Caco-2 (cell line): ENCODE measurements at regions of chr19 and their contacts with region 1.

Region 1: DNA sequence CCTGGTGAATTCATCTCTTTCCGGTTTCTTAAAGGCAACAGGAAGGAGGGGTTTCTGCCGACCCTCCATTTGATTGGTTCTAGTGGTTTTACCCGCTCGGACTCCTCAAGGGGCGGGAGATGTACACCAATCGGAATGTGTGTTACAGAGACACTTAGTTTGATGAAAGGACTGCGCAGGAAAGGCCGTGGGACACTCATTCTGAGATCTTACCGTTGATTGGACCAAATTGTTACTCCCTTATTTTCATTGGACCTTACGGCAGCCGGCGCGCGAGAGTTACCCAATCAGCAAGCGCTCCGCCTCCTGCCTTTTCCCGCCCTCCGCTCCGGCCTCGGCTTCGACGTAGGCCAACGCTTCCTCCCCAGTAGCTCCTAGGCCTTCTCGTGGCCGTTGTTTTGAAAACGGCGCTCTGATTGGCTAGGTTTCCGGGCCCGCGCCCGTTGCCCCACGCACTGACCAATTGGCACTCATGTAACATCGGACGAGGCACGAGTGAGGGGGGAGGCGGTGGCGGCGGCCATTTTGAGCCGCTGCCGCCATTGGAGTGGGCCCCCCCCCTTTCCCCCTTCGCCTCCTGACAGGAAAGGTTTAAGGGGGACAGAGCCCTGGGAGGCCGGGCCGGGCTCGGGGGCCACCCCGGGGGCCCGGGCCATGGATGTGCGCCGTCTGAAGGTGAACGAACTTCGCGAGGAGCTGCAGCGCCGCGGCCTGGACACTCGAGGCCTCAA is at the start of gene HNRNPUL1:
- DNase-seq: peak; percentile 99 to 100
- H3K4me3 ChIP-seq: peak within 1 kb of the TSS; percentile 86
- H3K4me3 Mint-ChIP-seq: peak within 1 kb of the TSS; percentile 83
- H3K27ac Mint-ChIP-seq: peak within 1 kb of the TSS; percentile 87
- H3K4me1 ChIP-seq: peaks cover 11% of the 10 kb centered on the region
- H3K4me1 Mint-ChIP-seq: peaks cover 30% of the 10 kb centered on the region
- H3K27me3 ChIP-seq: no peaks in the 10 kb centered on the region
- H3K27me3 Mint-ChIP-seq: no peaks in the 10 kb centered on the region
- CTCF ChIP-seq: peak; percentile 20 to 46
- total RNA-seq, gene HNRNPUL1: 322 and 324 TPM in 2 replicates

Region 2: GRCh38 chr19:40716655-40717324 is 547.2 kb before region 1 on chr19 and contains the starts of genes COQ8B and ITPKC:
- CTCF ChIA-PET with region 1: no interaction called
- POLR2A ChIA-PET with region 1: no interaction called
- intact Hi-C with region 1: loop called (anchors 2 kb)
- DNase-seq: peak; percentile 100
- H3K4me3 ChIP-seq: peak within 1 kb of the TSS; percentile 71
- H3K4me3 Mint-ChIP-seq: peak within 1 kb of the TSS; percentile 84
- H3K27ac Mint-ChIP-seq: peak within 1 kb of the TSS; percentile 93
- H3K4me1 ChIP-seq: peaks cover 6% of the 10 kb centered on the region; the same call in 1 of the 2 replicates
- H3K4me1 Mint-ChIP-seq: peaks cover 18% of the 10 kb centered on the region
- H3K27me3 ChIP-seq: no peaks in the 10 kb centered on the region
- H3K27me3 Mint-ChIP-seq: no peaks in the 10 kb centered on the region
- CTCF ChIP-seq: no peak
- total RNA-seq, gene COQ8B: 30.9 and 35.7 TPM in 2 replicates
- total RNA-seq, gene ITPKC: 28.5 and 31.2 TPM in 2 replicates

Region 3: GRCh38 chr19:41123716-41124294 is 140.2 kb before region 1 on chr19:
- CTCF ChIA-PET with region 1: interaction called, 5 read pairs
- POLR2A ChIA-PET with region 1: interaction called, 3 read pairs
- intact Hi-C with region 1: loop called (anchors 2 kb)
- DNase-seq: no peak
- H3K4me3 ChIP-seq: no peak overlapping the region
- H3K4me3 Mint-ChIP-seq: no peak overlapping the region
- H3K27ac Mint-ChIP-seq: no peak overlapping the region
- H3K4me1 ChIP-seq: no peaks in the 10 kb centered on the region
- H3K4me1 Mint-ChIP-seq: peaks cover 7% of the 10 kb centered on the region
- H3K27me3 ChIP-seq: no peaks in the 10 kb centered on the region
- H3K27me3 Mint-ChIP-seq: no peaks in the 10 kb centered on the region
- CTCF ChIP-seq: no peak

Region 4: GRCh38 chr19:41206926-41207750 is 56.9 kb before region 1 on chr19:
- CTCF ChIA-PET with region 1: interaction called, 118 read pairs
- POLR2A ChIA-PET with region 1: interaction called, 12 read pairs
- intact Hi-C with region 1: loop called (anchors 1 kb)
- DNase-seq: no peak
- H3K4me3 ChIP-seq: no peak overlapping the region
- H3K4me3 Mint-ChIP-seq: no peak overlapping the region
- H3K27ac Mint-ChIP-seq: no peak overlapping the region
- H3K4me1 ChIP-seq: no peaks in the 10 kb centered on the region
- H3K4me1 Mint-ChIP-seq: peaks cover 6% of the 10 kb centered on the region
- H3K27me3 ChIP-seq: no peaks in the 10 kb centered on the region
- H3K27me3 Mint-ChIP-seq: no peaks in the 10 kb centered on the region
- CTCF ChIP-seq: no peak

Region 5: DNA sequence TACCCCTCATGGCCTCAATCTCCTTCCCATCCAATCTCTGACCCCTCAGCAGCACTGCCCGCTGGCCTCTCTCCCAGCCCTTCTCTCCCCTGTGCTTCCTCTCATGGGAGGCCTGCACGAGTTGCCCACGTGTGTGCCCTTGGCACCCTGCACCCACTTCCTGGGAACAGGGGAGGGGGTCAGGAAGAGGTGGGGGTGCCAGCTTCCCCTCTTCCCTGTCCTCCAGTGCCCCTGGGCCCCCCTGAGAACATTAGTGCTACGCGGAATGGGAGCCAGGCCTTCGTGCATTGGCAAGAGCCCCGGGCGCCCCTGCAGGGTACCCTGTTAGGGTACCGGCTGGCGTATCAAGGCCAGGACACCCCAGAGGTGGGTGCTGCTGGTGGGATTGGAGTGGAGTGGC is 25.8 kb before region 1 on chr19:
- CTCF ChIA-PET with region 1: no interaction called
- POLR2A ChIA-PET with region 1: no interaction called
- intact Hi-C with region 1: no loop called
- DNase-seq: no peak
- H3K4me3 ChIP-seq: no peak overlapping the region
- H3K4me3 Mint-ChIP-seq: no peak overlapping the region
- H3K27ac Mint-ChIP-seq: no peak overlapping the region
- H3K4me1 ChIP-seq: no peaks in the 10 kb centered on the region
- H3K4me1 Mint-ChIP-seq: no peaks in the 10 kb centered on the region
- H3K27me3 ChIP-seq: no peaks in the 10 kb centered on the region
- H3K27me3 Mint-ChIP-seq: no peaks in the 10 kb centered on the region
- CTCF ChIP-seq: no peak

Region 6: DNA sequence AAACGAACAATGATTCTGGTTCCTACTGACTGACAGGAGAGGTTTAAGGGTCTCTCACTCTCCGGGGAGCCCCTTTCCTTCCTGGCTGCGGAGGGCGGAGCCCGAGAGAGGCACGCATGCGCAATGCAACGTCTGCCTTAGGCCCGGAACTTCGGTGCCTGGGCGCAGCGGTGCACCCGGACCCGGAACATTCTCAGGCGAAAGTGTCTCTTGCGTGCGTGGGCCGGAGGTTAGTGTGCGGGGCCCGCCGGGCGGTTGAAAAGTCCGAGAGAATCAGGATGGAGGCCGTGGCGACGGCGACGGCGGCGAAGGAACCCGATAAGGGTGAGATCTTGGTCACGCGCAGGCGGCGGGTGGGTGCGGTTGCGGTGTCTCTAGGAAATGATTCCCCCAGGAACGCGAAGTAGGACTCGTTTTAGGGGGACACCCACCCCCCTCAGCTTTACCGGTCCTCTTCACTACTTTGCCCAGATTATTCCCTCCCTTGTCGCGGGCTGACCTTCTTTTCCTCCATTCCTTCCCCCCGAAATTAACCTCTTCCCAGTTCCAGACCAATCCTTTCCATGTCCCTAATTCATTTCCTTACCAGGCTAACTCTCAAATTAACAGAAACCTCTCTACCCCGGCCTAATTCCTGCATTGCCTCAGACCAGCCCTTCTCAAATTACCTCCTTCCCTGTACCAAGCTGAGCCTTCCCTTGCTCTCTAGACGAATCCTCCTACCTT is 46.2 kb after region 1 on chr19 and contains the start of gene CCDC97:
- CTCF ChIA-PET with region 1: interaction called, 7 read pairs
- POLR2A ChIA-PET with region 1: interaction called, 4 read pairs
- intact Hi-C with region 1: loop called (anchors 1 kb)
- DNase-seq: peak; percentile 86 to 90
- H3K4me3 ChIP-seq: peak within 1 kb of the TSS; percentile 64
- H3K4me3 Mint-ChIP-seq: peak within 1 kb of the TSS; percentile 92
- H3K27ac Mint-ChIP-seq: peak within 1 kb of the TSS; percentile 95
- H3K4me1 ChIP-seq: peaks cover 17% of the 10 kb centered on the region
- H3K4me1 Mint-ChIP-seq: peaks cover 7% of the 10 kb centered on the region
- H3K27me3 ChIP-seq: no peaks in the 10 kb centered on the region
- H3K27me3 Mint-ChIP-seq: no peaks in the 10 kb centered on the region
- CTCF ChIP-seq: no peak
- total RNA-seq, gene CCDC97: 47.1 and 47.8 TPM in 2 replicates